Naive thymus-derived CD4-positive, alpha-beta T cell (primary cell): ENCODE measurements at regions of chr16 and their contacts with region 1.

Region 1: DNA sequence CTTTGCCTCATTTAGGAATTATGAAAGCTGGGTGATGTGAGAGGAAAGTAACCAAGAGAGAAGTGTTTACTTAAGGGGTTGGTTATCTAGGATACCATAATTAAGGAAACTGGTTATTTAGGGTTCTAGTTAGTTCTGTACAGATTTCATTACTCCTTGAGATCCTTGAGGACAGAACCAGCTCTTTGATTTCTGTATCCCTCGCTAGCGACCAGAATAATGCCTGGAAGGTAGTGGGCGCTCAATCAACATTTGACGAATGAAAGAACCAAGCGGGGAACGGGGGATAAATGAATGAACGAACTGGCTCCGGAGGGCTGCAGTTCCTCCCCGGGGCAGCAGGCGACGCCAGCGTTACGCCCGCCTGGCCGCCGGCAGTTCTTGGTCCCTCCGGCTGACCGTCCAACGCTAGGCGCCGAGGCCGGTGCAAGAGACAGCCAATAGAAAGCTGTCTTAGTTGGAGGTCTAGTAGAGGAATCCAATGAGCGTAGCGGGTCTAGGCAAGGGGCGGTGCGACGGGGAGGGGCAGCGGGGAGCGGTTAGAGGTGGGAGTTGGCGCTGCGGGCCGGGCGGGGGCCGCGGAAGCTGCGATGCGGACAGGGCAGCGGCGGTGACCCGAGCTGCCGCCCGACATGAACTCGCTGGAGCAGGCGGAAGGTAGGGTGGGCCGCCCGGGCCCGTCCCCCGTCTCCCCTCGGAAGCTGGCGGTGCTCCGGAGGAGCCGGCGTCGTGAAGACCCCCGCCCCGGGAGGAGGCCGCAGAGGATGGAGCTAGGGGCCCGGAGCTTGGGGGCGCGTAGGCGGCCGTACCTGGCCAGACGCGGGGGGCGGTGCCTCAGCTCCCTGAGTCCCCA is at the start of gene CNEP1R1:
- DNase-seq: peak; percentile 82 to 95 (median 92)
- ATAC-seq: peak; percentile 98
- H3K4me3 ChIP-seq: peak within 1 kb of the TSS; percentile 97
- H3K4me3 Mint-ChIP-seq: peak within 1 kb of the TSS; percentile 88 to 99 (median 96)
- H3K27ac ChIP-seq: peak within 1 kb of the TSS; percentile 81
- H3K27ac Mint-ChIP-seq: peak within 1 kb of the TSS; percentile 87 to 97 (median 94)
- H3K4me1 ChIP-seq: peaks cover 11 to 16% of the 10 kb centered on the region in 2 donors
- H3K4me1 Mint-ChIP-seq: peaks cover 5 to 42% (median 28%) of the 10 kb centered on the region in 7 donors
- H3K27me3 ChIP-seq: no peaks in the 10 kb centered on the region
- H3K27me3 Mint-ChIP-seq: peaks cover 0 to 16% (median 0%) of the 10 kb centered on the region in 5 donors
- total RNA-seq, gene CNEP1R1: 26.8 to 41.0 (median 34.3) TPM

Region 2: GRCh38 chr16:49441366-49441780 is 583.5 kb before region 1 on chr16:
- CTCF ChIA-PET with region 1: no interaction called
- POLR2A ChIA-PET with region 1: no interaction called
- intact Hi-C with region 1: loop called in 1 of 2 experiments (anchors 10 kb)
- DNase-seq: peak; percentile 23 to 87 (median 83)
- ATAC-seq: peak; percentile 90
- H3K4me3 ChIP-seq: peak overlapping the region; percentile 19
- H3K4me3 Mint-ChIP-seq: peak overlapping the region; percentile 53 to 87 (median 73)
- H3K27ac ChIP-seq: peak overlapping the region; percentile 75
- H3K27ac Mint-ChIP-seq: peak overlapping the region; percentile 73 to 97 (median 92)
- H3K4me1 ChIP-seq: peaks cover 9 to 25% of the 10 kb centered on the region in 2 donors
- H3K4me1 Mint-ChIP-seq: peaks cover 15 to 45% (median 29%) of the 10 kb centered on the region in 7 donors
- H3K27me3 ChIP-seq: no peaks in the 10 kb centered on the region
- H3K27me3 Mint-ChIP-seq: peaks cover 0 to 6% (median 0%) of the 10 kb centered on the region in 5 donors

Region 3: GRCh38 chr16:50152807-50153452 is 128.0 kb after region 1 on chr16 and contains the start of gene TENT4B:
- CTCF ChIA-PET with region 1: no interaction called
- POLR2A ChIA-PET with region 1: interaction called, 6 read pairs
- intact Hi-C with region 1: loop called (anchors 1 kb)
- DNase-seq: peak; percentile 87 to 97 (median 96)
- ATAC-seq: peak; percentile 88
- H3K4me3 ChIP-seq: peak within 1 kb of the TSS; percentile 87
- H3K4me3 Mint-ChIP-seq: peak within 1 kb of the TSS; percentile 87 to 99 (median 94)
- H3K27ac ChIP-seq: peak within 1 kb of the TSS; percentile 99
- H3K27ac Mint-ChIP-seq: peak within 1 kb of the TSS; percentile 93 to 99 (median 97)
- H3K4me1 ChIP-seq: peaks cover 16 to 30% of the 10 kb centered on the region in 2 donors
- H3K4me1 Mint-ChIP-seq: peaks cover 28 to 44% (median 40%) of the 10 kb centered on the region in 7 donors
- H3K27me3 ChIP-seq: no peaks in the 10 kb centered on the region
- H3K27me3 Mint-ChIP-seq: no peaks in the 10 kb centered on the region
- total RNA-seq, gene TENT4B: 18.8 to 25.9 (median 23.8) TPM

Region 4: DNA sequence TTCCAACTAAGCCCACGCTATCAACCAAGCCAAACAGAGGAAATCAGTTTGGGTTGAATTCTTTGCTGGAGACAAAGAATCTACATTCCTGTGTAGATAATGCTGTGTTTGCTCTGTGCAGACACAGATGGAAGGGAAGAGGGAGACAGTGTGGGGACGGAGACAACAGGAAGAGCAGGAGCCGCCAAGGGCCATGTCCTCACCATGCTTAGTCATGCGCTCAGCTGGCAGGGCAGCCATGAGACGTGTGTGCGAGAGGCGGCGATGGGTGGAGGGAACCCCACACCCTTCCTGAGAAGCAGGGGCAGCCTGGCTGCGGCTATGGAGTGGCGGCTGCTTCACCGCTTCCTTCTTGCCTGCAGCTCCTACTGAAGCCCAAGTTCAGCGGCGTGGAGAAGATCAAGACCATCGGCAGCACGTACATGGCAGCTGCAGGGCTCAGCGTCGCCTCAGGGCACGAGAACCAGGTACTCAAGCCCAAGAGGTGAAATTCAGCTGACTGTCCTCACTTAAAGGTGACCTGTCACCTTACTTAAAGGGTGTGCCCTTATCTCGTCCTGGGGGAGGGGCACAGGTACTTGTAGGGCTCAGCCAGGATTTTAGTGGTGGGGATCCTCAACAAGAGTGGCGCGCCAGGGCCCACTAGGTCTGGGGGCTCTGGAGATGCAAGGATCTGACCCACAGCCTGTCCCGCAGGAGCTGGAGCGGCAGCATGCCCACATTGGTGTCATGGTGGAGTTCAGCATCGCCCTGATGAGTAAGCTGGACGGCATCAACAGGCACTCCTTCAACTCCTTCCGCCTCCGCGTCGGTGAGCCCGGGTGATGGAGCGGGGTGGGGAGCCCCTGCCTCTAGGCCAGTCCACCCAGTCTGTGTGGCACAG is 288.9 kb after region 1 on chr16:
- CTCF ChIA-PET with region 1: no interaction called
- POLR2A ChIA-PET with region 1: no interaction called
- intact Hi-C with region 1: loop called in 1 of 2 experiments (anchors 2 kb)
- DNase-seq: peak in 8 of 9 donors; percentile 25 to 48 (median 35)
- ATAC-seq: peak; percentile 88
- H3K4me3 ChIP-seq: no peak overlapping the region
- H3K4me3 Mint-ChIP-seq: peak overlapping the region; percentile 6 to 72 (median 52)
- H3K27ac ChIP-seq: peak overlapping the region; percentile 43
- H3K27ac Mint-ChIP-seq: peak overlapping the region; percentile 81 to 93 (median 89)
- H3K4me1 ChIP-seq: no peaks in the 10 kb centered on the region
- H3K4me1 Mint-ChIP-seq: peaks cover 14 to 36% (median 25%) of the 10 kb centered on the region in 7 donors
- H3K27me3 ChIP-seq: no peaks in the 10 kb centered on the region
- H3K27me3 Mint-ChIP-seq: no peaks in the 10 kb centered on the region

Region 5: DNA sequence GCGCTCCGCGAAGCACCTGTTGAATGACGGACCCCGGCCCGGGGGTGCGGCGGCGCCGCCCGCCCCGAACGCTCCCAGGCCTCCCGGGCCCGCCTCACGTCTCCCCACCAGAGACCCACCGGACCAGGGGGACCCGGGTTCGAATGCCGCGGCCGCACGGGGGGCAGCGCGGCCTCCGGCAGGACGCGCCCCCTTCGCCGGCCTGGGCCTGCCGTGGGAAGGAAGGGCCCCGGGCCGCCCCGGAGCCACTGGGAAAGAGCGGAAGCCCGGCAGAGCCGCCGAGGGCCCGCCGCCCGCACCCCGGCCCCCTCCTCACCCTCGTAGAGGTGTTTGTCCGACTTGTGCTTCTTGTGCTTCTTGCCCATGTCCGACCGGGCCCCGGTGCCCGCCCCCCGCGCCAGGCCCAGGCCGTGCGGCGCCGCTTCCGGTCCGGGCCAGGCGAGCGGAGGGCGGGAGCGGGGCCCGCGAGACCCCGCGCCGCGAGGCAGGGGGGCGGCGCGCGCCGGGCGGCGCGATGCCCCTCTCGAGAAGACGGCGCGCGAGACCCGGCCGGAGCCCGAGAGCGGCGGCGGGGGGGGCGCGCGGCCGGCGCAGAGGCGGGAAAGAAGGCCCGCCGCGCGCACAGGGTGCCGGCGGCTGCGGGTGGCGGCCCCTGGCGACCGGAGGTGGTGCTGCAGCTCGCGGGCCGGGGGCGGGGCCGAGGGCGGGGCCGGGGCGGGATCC is 343.7 kb after region 1 on chr16 and contains the start of gene BRD7:
- CTCF ChIA-PET with region 1: no interaction called
- POLR2A ChIA-PET with region 1: no interaction called
- intact Hi-C with region 1: loop called (anchors 1 to 2 kb)
- DNase-seq: peak; percentile 50 to 82 (median 68)
- ATAC-seq: peak; percentile 98
- H3K4me3 ChIP-seq: peak within 1 kb of the TSS; percentile 61
- H3K4me3 Mint-ChIP-seq: peak within 1 kb of the TSS; percentile 92 to 98 (median 96)
- H3K27ac ChIP-seq: peak within 1 kb of the TSS; percentile 86
- H3K27ac Mint-ChIP-seq: peak within 1 kb of the TSS; percentile 92 to 99 (median 96)
- H3K4me1 ChIP-seq: peaks cover 27 to 39% of the 10 kb centered on the region in 2 donors
- H3K4me1 Mint-ChIP-seq: peaks cover 40 to 58% (median 56%) of the 10 kb centered on the region in 7 donors
- H3K27me3 ChIP-seq: no peaks in the 10 kb centered on the region
- H3K27me3 Mint-ChIP-seq: no peaks in the 10 kb centered on the region
- total RNA-seq, gene BRD7: 80.9 to 91.1 (median 85.0) TPM

Region 6: GRCh38 chr16:50681021-50681885 is 656.3 kb after region 1 on chr16 and contains the start of gene SNX20:
- CTCF ChIA-PET with region 1: no interaction called
- POLR2A ChIA-PET with region 1: no interaction called
- intact Hi-C with region 1: loop called in 1 of 2 experiments (anchors 5 kb)
- DNase-seq: peak in 8 of 9 donors; percentile 40 to 80 (median 75)
- ATAC-seq: peak; percentile 77
- H3K4me3 ChIP-seq: peak within 1 kb of the TSS; percentile 85
- H3K4me3 Mint-ChIP-seq: peak within 1 kb of the TSS; percentile 83 to 98 (median 93)
- H3K27ac ChIP-seq: peak within 1 kb of the TSS; percentile 90
- H3K27ac Mint-ChIP-seq: peak within 1 kb of the TSS; percentile 89 to 99 (median 97)
- H3K4me1 ChIP-seq: peaks cover 80 to 81% of the 10 kb centered on the region in 2 donors
- H3K4me1 Mint-ChIP-seq: peaks cover 68 to 94% (median 89%) of the 10 kb centered on the region in 7 donors
- H3K27me3 ChIP-seq: no peaks in the 10 kb centered on the region
- H3K27me3 Mint-ChIP-seq: no peaks in the 10 kb centered on the region
- total RNA-seq, gene SNX20: 32.4 to 94.9 (median 70.8) TPM

Region 7: GRCh38 chr16:50806099-50807062 is 781.5 kb after region 1 on chr16:
- CTCF ChIA-PET with region 1: interaction called, 26 read pairs
- POLR2A ChIA-PET with region 1: interaction called, 3 read pairs
- intact Hi-C with region 1: loop called (anchors 1 kb)
- DNase-seq: peak; percentile 66 to 92 (median 89)
- ATAC-seq: peak; percentile 98
- H3K4me3 ChIP-seq: peak overlapping the region; percentile 34
- H3K4me3 Mint-ChIP-seq: peak overlapping the region; percentile 12 to 90 (median 80)
- H3K27ac ChIP-seq: no peak overlapping the region
- H3K27ac Mint-ChIP-seq: peak overlapping the region; percentile 15 to 92 (median 81)
- H3K4me1 ChIP-seq: peaks cover 3 to 5% of the 10 kb centered on the region in 2 donors
- H3K4me1 Mint-ChIP-seq: peaks cover 8 to 19% (median 13%) of the 10 kb centered on the region in 7 donors
- H3K27me3 ChIP-seq: no peaks in the 10 kb centered on the region
- H3K27me3 Mint-ChIP-seq: no peaks in the 10 kb centered on the region